Activated T-helper 2 cell treated with anti-CD3 and anti-CD28 coated beads, Interferon-gamma antibody, Interleukin-2, Interleukin-4, amounts not matched to agents 10 μg/mL and 5 μg/mL and 100 μg/mL, durations not matched to agents 14 hours and 24 hours and 36 hours (primary cell): ENCODE measurements at regions of chr16 and their contacts with region 1.

Region 1: GRCh38 chr16:25224731-25225319 is 8.1 kb downstream of the AQP8 start:
- DNase-seq: no peak
- H3K4me3 Mint-ChIP-seq: no peak overlapping the region
- H3K27ac Mint-ChIP-seq: no peak overlapping the region
- H3K4me1 Mint-ChIP-seq: peaks cover 1% of the 10 kb centered on the region
- H3K27me3 Mint-ChIP-seq: no peaks in the 10 kb centered on the region

Region 2: GRCh38 chr16:25126820-25127232 is 98.0 kb before region 1 on chr16:
- intact Hi-C with region 1: loop called (anchors 1 kb)
- DNase-seq: no peak
- H3K4me3 Mint-ChIP-seq: no peak overlapping the region
- H3K27ac Mint-ChIP-seq: peak overlapping the region; percentile 30
- H3K4me1 Mint-ChIP-seq: peaks cover 24% of the 10 kb centered on the region
- H3K27me3 Mint-ChIP-seq: no peaks in the 10 kb centered on the region

Region 3: DNA sequence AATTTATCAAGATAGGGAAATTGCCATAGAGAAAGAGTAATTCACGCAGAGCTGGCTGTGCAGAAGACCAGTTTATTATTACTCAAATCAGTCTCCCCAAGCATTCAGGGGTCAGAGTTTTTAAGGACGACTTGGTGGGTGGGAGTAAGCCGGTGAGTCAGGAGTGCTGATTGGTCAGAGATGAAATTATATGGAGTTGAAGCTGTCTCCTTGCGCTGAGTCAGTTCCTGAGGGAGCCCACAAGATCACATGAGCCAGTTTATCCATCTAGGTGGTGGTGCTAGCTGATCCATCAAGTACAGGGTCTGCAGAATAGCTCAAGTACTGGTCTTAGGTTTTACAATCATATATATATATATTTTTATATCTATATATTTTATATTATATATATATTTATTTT is 14.1 kb before region 1 on chr16:
- intact Hi-C with region 1: no loop called
- DNase-seq: no peak
- H3K4me3 Mint-ChIP-seq: no peak overlapping the region
- H3K27ac Mint-ChIP-seq: no peak overlapping the region
- H3K4me1 Mint-ChIP-seq: peaks cover 2% of the 10 kb centered on the region
- H3K27me3 Mint-ChIP-seq: no peaks in the 10 kb centered on the region

Region 4: DNA sequence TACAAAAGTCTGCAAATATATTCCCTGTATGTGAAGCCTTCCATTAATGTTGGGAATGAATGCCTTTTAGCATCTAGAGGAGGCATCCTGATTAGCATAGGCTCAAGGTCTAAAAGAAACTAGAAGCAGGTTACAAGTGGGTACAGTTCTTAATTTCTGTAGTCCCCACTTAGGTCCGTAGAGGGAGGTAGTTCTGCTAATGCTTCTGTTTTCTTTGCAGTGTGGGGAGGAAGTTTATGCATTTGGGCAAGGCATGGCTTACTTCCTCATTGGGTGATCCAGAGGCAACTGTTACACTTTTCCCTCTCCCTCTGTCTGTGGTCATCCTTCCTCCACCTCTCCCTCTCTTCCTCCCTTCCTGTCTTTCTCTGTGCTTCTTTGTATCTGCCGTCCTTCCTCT is 141.3 kb after region 1 on chr16:
- intact Hi-C with region 1: no loop called
- DNase-seq: no peak
- H3K4me3 Mint-ChIP-seq: no peak overlapping the region
- H3K27ac Mint-ChIP-seq: no peak overlapping the region
- H3K4me1 Mint-ChIP-seq: no peaks in the 10 kb centered on the region
- H3K27me3 Mint-ChIP-seq: no peaks in the 10 kb centered on the region